OCI-LY7 (cell line): ENCODE measurements at regions of chr2 and their contacts with region 1.

Region 1: GRCh38 chr2:64101141-64101591 is 43.1 kb downstream of the PELI1 start:
- DNase-seq: peak; percentile 52
- H3K4me3 ChIP-seq: peak overlapping the region; percentile 33
- H3K27ac ChIP-seq: peak overlapping the region; percentile 99
- H3K4me1 ChIP-seq: peaks cover 92% of the 10 kb centered on the region
- CTCF ChIP-seq: no peak

Region 2: GRCh38 chr2:64052468-64053241 is 48.5 kb before region 1 on chr2:
- CTCF ChIA-PET with region 1: no interaction called
- POLR2A ChIA-PET with region 1: interaction called, 9 read pairs
- intact Hi-C with region 1: loop called (anchors 1 kb)
- DNase-seq: peak; percentile 83
- H3K4me3 ChIP-seq: peak overlapping the region; percentile 11
- H3K27ac ChIP-seq: peak overlapping the region; percentile 96
- H3K4me1 ChIP-seq: peaks cover 84% of the 10 kb centered on the region
- CTCF ChIP-seq: no peak

Region 3: DNA sequence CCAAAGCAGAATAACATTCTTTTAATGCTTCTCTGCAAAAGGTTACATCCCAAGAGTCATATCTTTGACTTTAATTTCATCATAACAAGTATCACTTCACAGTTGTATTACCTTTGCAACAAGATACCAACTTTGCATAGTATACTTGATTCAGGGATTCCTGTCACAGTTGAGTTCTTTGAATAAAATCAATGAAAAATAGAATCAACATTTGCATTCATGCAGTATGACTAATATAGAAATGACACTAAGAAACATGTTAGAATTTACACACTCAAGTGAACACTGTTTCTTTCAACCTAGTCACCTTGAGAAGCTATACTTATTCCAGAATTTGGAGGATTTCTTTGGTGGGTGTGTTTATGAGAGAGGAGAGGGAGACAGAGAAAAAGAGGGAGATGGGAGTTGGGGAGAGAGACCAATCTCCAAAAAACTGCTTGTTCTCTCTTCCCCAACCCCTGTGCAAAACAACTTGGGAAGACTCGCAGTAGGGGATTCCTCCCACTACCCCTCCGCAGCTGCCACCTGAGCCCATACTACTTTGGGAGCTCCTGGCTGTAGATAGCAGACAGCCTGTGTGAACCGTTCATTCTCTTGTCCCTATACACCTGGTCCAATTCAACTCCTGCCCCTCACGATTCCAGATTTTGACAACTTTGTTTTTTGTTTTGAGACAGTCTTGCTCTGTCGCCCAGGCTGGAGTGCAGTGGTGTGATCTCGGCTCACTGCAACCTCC is 14.7 kb before region 1 on chr2:
- CTCF ChIA-PET with region 1: interaction called, 3 read pairs
- POLR2A ChIA-PET with region 1: interaction called, 26 read pairs
- intact Hi-C with region 1: loop called (anchors 2 kb)
- DNase-seq: peak; percentile 75
- H3K4me3 ChIP-seq: peak overlapping the region; percentile 55
- H3K27ac ChIP-seq: peak overlapping the region; percentile 99
- H3K4me1 ChIP-seq: peaks cover 95% of the 10 kb centered on the region
- CTCF ChIP-seq: no peak

Region 4: GRCh38 chr2:64119369-64119768 is 18.2 kb after region 1 on chr2:
- CTCF ChIA-PET with region 1: no interaction called
- POLR2A ChIA-PET with region 1: interaction called, 78 read pairs
- intact Hi-C with region 1: no loop called
- DNase-seq: no peak
- H3K4me3 ChIP-seq: no peak overlapping the region
- H3K27ac ChIP-seq: no peak overlapping the region
- H3K4me1 ChIP-seq: peaks cover 93% of the 10 kb centered on the region
- CTCF ChIP-seq: no peak

Region 5: DNA sequence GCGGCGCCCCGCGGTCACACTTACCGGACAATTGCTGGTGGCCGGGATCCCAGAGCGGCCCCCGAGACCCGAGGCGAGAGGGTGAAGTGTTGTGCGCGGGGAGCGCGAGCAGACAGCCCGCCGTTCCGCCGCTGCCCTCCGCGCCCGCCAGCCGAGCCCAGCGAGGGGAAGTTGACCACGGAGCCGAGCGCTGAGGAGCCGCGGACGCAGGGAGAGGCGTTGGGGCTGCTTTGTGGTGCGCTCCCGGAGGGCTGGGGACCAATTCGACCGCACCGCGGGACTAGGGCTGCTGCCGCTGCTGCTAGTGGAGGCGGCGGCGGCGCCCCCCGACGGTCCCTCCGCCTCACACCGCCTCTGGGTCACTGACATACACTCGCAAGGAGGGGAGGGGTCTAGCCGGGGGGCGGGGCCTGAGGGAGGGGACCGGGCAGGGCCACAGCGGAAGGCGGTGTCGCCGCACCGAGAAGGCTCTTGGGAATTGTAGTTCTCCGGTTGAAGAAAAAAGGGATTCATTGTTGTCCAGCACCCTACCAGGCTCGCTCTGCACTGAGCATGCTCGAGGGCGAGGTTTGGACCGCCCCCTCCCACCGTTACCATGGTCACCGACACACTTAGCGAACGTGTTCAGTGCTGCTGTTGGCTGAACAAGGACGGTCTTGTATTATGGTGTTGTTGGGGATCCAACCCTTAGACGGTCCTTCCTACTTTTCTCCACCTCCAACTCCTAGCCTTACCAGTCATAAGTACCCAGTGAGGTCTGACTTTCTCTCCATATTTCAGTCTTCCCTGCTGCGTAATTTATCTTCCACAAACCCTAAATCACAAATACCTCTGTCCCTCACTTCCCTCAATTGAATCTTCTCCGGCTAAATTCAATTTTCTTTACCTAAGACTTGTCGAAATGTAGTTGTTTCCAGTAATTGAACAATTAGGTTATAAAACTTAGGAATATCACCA is 43.2 kb after region 1 on chr2 and contains the start of gene PELI1:
- CTCF ChIA-PET with region 1: no interaction called
- POLR2A ChIA-PET with region 1: interaction called, 21 read pairs
- intact Hi-C with region 1: loop called (anchors 1 kb)
- DNase-seq: peak; percentile 99
- H3K4me3 ChIP-seq: peak within 1 kb of the TSS; percentile 97
- H3K27ac ChIP-seq: peak within 1 kb of the TSS; percentile 80
- H3K4me1 ChIP-seq: peaks cover 41% of the 10 kb centered on the region
- CTCF ChIP-seq: peak; percentile 68; the same call in 1 of the 2 replicates
- total RNA-seq, gene PELI1: 108 and 110 TPM in 2 replicates

Region 6: DNA sequence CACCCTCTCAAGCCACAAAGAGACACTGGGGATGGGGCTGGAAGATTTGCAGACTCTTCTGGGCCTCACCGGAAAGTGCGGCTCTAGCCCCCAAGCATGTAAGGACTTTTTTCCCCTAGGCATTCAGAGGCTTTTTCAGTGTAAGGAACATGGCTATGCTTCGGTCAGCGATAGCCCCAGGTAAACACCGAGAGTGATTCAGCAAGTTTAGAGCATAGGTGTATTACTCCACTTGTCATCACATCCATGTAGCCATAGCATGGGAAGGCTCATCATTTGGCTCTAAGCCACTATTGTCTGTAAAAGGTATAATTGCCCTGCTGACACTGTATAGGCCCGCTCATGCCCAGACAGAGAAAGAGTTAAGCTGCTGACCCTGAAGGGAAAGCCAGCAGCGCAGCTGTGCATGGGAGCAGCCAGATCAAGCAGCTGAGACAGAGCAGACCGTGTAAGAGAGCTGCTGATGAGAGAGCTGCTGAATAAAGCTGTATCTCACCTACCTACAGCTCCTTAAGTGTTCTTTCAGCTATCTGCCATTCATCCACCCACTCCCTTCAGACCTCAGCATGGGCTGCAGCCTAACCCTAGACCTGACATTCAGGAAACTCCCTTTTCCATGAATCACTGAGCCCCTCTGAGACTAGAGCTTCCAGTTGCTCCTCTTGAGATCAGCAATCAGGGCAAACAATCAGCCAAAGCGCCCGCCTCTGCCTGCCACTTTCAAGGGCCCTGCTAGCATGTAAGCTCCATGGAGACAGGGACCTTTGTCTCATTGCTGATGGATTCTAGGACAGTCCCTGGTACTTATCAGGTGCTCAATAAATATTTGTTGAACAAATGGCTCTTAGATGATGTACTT is 378.3 kb after region 1 on chr2:
- CTCF ChIA-PET with region 1: no interaction called
- POLR2A ChIA-PET with region 1: no interaction called
- intact Hi-C with region 1: no loop called
- DNase-seq: no peak
- H3K4me3 ChIP-seq: no peak overlapping the region
- H3K27ac ChIP-seq: no peak overlapping the region
- H3K4me1 ChIP-seq: peaks cover 3% of the 10 kb centered on the region
- CTCF ChIP-seq: no peak